ENCODE measurements at regions of chr3 and their contacts with region 1.

Region 1: GRCh38 chr3:195271116-195271858 is at the start of gene XXYLT1:
- DNase-seq: peak; percentile 70 to 95
- H3K4me3 ChIP-seq: peak within 1 kb of the TSS; percentile 89
- H3K27ac ChIP-seq: no peak within 1 kb of the TSS
- H3K4me1 ChIP-seq: peaks cover 18% of the 10 kb centered on the region
- H3K27me3 ChIP-seq: no peaks in the 10 kb centered on the region
- CTCF ChIP-seq: peak; percentile 99
- total RNA-seq, gene XXYLT1: 13.3 and 14.6 TPM in 2 replicates

Region 2: GRCh38 chr3:194671900-194672808 is 599.1 kb before region 1 on chr3 and contains the start of gene LSG1:
- CTCF ChIA-PET with region 1: interaction called, 14 read pairs
- POLR2A ChIA-PET with region 1: no interaction called
- intact Hi-C with region 1: no loop called
- DNase-seq: peak; percentile 71 to 93
- H3K4me3 ChIP-seq: peak within 1 kb of the TSS; percentile 99
- H3K27ac ChIP-seq: peak within 1 kb of the TSS; percentile 88
- H3K4me1 ChIP-seq: peaks cover 13% of the 10 kb centered on the region; the same call in 1 of the 2 replicates
- H3K27me3 ChIP-seq: no peaks in the 10 kb centered on the region
- CTCF ChIP-seq: no peak
- total RNA-seq, gene LSG1: 59.2 and 71.8 TPM in 2 replicates

Region 3: GRCh38 chr3:195372220-195372619 is 100.9 kb after region 1 on chr3:
- CTCF ChIA-PET with region 1: no interaction called
- POLR2A ChIA-PET with region 1: no interaction called
- intact Hi-C with region 1: no loop called
- DNase-seq: no peak
- H3K4me3 ChIP-seq: no peak overlapping the region
- H3K27ac ChIP-seq: no peak overlapping the region
- H3K4me1 ChIP-seq: no peaks in the 10 kb centered on the region
- H3K27me3 ChIP-seq: no peaks in the 10 kb centered on the region
- CTCF ChIP-seq: no peak

Region 4: GRCh38 chr3:195442573-195443390 is 171.5 kb after region 1 on chr3 and contains the start of gene ACAP2:
- CTCF ChIA-PET with region 1: interaction called, 4 read pairs
- POLR2A ChIA-PET with region 1: interaction called, 8 read pairs
- intact Hi-C with region 1: loop called (anchors 1 kb)
- DNase-seq: peak; percentile 99 to 100
- H3K4me3 ChIP-seq: peak within 1 kb of the TSS; percentile 73
- H3K27ac ChIP-seq: peak within 1 kb of the TSS; percentile 62
- H3K4me1 ChIP-seq: peaks cover 44% of the 10 kb centered on the region
- H3K27me3 ChIP-seq: no peaks in the 10 kb centered on the region
- CTCF ChIP-seq: no peak
- total RNA-seq, gene ACAP2: 67.9 and 71.0 TPM in 2 replicates

Region 5: DNA sequence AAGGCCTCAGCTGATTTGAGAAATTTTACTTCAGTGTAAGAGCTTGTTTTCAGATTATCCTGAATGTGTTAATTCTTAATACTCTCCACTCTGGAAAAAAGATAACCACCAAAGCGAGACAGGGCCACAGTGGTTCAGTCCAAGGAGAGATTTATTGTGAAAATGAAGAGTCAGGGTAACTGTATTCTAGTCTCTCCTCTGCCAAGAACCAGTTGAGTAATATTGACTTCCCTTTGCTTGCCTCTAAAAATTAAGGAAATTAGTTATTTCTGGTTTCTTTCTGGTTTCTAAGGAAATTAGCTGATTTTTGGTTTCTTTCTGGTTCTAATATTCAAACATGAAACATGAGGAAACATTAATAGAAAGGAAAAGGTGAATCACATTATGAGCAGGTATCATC is 236.9 kb after region 1 on chr3:
- CTCF ChIA-PET with region 1: no interaction called
- POLR2A ChIA-PET with region 1: no interaction called
- intact Hi-C with region 1: no loop called
- DNase-seq: peak in 1 of 2 experiments; percentile 22
- H3K4me3 ChIP-seq: no peak overlapping the region
- H3K27ac ChIP-seq: no peak overlapping the region
- H3K4me1 ChIP-seq: no peaks in the 10 kb centered on the region
- H3K27me3 ChIP-seq: no peaks in the 10 kb centered on the region
- CTCF ChIP-seq: no peak

Region 6: DNA sequence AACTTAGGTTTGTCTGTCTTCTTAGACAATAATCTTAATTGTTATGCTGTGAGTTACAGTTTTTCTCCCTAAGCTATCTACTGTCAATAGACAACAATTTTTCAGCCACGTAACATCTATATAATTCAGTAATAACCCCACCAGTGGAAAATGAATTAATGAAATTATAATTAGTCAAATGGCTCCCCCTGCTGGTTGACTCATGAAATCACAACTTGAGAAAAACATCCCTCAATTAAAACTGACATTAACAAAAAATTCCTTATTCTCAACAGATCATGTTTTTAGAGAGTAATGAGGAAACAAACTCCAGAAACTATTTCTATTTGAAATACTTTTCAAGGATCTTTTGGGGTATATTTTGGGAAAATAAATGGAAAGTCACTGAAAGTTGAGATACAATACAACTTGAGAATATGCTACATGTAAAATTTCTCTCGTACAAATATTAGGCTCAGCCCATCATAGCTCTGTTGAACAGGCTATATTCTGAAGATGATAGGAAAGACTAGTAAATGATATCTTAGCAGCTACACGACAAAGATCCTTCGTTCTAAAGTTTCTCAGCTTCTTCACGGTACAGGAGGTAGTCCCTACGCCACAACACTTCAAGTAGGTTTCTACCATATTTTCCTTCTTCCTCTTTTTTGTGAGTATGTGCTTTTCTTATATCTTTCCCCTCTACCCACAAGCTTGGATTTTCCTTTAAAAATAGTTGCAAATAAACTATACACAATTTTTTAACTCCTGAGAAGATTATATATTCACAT is 251.2 kb after region 1 on chr3:
- CTCF ChIA-PET with region 1: interaction called, 27 read pairs
- POLR2A ChIA-PET with region 1: interaction called, 7 read pairs
- intact Hi-C with region 1: loop called (anchors 1 kb)
- DNase-seq: peak in 1 of 2 experiments; percentile 46
- H3K4me3 ChIP-seq: no peak overlapping the region
- H3K27ac ChIP-seq: no peak overlapping the region
- H3K4me1 ChIP-seq: no peaks in the 10 kb centered on the region
- H3K27me3 ChIP-seq: no peaks in the 10 kb centered on the region
- CTCF ChIP-seq: peak; percentile 98

Region 7: GRCh38 chr3:195542698-195543499 is 271.6 kb after region 1 on chr3 and contains the start of gene PPP1R2:
- CTCF ChIA-PET with region 1: interaction called, 11 read pairs
- POLR2A ChIA-PET with region 1: interaction called, 6 read pairs
- intact Hi-C with region 1: no loop called
- DNase-seq: peak; percentile 80 to 95
- H3K4me3 ChIP-seq: peak within 1 kb of the TSS; percentile 78
- H3K27ac ChIP-seq: peak within 1 kb of the TSS; percentile 42
- H3K4me1 ChIP-seq: peaks cover 34% of the 10 kb centered on the region
- H3K27me3 ChIP-seq: no peaks in the 10 kb centered on the region
- CTCF ChIP-seq: no peak
- total RNA-seq, gene PPP1R2: 49.1 and 73.0 TPM in 2 replicates